ENCODE measurements at regions of chr11 and their contacts with region 1.

Region 1: GRCh38 chr11:19259487-19260345 is 19.0 kb upstream of the E2F8 start:
- DNase-seq: peak; percentile 26
- H3K4me3 ChIP-seq: no peak overlapping the region
- H3K27ac ChIP-seq: no peak overlapping the region
- H3K27me3 ChIP-seq: peaks cover 32% of the 10 kb centered on the region
- CTCF ChIP-seq: peak; percentile 96

Region 2: DNA sequence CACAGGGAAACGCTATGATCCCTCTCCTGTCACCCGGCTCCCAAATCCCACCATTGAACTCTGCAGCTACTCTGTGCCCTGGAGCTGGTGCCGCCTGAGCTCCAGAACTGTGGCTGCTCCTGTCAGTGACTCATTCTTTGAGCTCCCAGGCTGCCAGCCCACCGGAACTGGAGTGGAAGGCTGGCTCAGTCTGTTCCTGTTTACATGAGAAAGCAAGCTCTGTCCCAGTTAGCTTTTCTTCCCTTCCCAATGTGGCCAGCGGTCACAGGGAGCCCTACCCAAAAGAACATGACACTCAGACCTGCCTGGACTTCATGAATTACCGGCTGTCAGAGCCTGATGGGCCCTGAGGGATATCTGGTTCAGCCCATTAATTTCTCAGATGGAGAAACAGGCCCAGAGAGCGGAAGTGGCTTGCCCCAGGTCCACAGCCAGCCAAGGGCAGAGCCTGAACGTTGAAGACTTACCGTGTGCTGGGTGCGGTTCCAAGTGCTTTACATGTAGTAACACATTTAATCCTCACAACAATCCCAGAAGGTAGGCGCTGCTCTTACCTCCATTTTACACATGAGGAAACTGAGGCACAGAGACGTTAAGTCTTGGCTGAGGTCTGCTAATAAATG is 509.9 kb before region 1 on chr11:
- CTCF ChIA-PET with region 1: no interaction called
- POLR2A ChIA-PET with region 1: no interaction called
- DNase-seq: peak; percentile 29
- H3K4me3 ChIP-seq: no peak overlapping the region
- H3K27ac ChIP-seq: peak overlapping the region; percentile 57
- H3K27me3 ChIP-seq: no peaks in the 10 kb centered on the region
- CTCF ChIP-seq: no peak

Region 3: GRCh38 chr11:19134004-19134403 is 125.7 kb before region 1 on chr11:
- CTCF ChIA-PET with region 1: no interaction called
- POLR2A ChIA-PET with region 1: no interaction called
- DNase-seq: no peak
- H3K4me3 ChIP-seq: no peak overlapping the region
- H3K27ac ChIP-seq: no peak overlapping the region
- H3K27me3 ChIP-seq: no peaks in the 10 kb centered on the region
- CTCF ChIP-seq: no peak

Region 4: DNA sequence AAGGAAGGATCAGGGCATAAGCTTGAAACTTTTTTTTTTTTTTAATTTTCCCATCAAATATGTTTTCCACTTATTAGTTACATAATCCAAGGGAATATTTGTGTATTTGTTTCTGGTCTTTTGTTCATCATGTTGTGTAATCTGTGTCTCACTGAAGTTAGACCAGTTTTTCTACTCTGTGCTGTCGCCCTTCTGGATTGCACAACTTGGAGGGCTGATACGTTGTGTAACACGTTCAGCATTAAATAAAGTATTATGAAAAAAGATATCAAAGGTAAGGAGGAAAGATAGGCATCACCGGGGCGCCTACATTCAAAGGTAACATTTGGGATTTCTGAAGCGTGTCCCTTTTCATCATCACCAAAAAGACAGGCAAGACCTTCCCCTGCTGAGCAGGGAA is 15.6 kb before region 1 on chr11:
- CTCF ChIA-PET with region 1: interaction called, 19 read pairs
- POLR2A ChIA-PET with region 1: no interaction called
- DNase-seq: no peak
- H3K4me3 ChIP-seq: no peak overlapping the region
- H3K27ac ChIP-seq: no peak overlapping the region
- H3K27me3 ChIP-seq: peaks cover 23% of the 10 kb centered on the region
- CTCF ChIP-seq: no peak

Region 5: DNA sequence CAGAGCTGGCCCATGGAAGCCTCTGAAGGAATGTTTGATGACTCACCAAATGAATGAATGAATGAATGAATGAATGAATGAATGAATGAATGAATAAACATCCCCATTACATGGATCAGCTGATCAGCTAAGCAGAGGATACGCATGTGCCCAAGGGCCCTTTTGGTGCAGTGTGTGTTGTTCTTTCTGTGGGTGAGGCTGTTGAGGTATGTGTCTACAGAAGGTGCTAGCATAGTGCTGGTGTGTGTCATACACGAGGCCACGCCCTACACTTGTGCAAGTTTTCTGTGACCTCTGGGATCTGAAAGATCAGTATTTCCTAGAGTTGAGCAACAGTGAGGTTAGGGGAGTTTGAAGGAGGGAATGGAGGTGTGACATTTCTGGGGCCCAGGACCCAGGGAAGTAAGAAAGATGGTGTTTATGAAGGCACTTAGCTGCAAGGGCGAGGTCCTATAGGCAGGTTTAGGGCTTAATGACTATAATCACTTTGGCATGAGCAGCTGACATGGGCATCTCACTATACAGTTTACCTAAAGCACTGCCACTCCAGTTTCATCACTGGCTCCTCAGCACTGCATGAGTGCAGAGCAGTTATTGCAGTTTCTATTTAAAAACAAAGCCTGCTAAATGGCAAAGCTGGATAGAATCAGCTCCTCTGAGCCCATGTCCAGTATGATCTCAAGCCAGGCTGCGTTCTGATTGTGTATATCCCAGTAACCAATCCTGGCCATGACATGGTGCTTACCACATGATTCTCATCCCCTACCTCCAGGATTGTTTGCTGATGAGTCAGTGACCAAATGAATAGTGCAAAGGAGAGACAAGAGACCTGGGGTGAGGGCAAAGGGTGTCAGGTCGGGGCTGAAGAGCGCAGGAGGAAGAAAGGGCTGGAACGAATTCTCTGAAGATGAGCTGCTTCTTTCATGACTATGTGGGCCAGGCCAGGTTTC is 17.4 kb after region 1 on chr11:
- CTCF ChIA-PET with region 1: interaction called, 19 read pairs
- POLR2A ChIA-PET with region 1: no interaction called
- DNase-seq: no peak
- H3K4me3 ChIP-seq: no peak overlapping the region
- H3K27ac ChIP-seq: no peak overlapping the region
- H3K27me3 ChIP-seq: peaks cover 13% of the 10 kb centered on the region
- CTCF ChIP-seq: no peak

Region 6: DNA sequence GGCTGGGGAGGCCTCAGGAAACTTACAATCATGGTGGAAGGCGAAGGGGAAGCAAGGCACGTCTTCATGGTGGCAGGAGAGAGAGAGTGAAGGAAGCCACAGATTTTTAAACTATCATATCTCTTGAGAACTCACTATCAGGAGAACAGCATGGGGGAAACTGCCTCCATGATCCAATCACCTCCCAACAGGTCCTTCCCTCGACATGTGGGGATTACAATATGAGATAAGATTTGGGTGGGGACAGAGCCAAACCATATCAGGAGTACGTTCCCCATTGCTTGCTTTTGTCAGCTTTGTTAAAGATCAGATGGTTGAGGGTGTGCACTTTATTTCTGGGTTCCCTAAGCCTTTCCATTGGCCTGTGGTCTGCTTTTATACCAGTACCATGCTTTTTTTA is 34.7 kb after region 1 on chr11:
- CTCF ChIA-PET with region 1: interaction called, 10 read pairs
- POLR2A ChIA-PET with region 1: no interaction called
- DNase-seq: no peak
- H3K4me3 ChIP-seq: no peak overlapping the region
- H3K27ac ChIP-seq: no peak overlapping the region
- H3K27me3 ChIP-seq: peaks cover 20% of the 10 kb centered on the region
- CTCF ChIP-seq: no peak

Region 7: GRCh38 chr11:19326499-19326898 is 66.8 kb after region 1 on chr11:
- CTCF ChIA-PET with region 1: interaction called, 12 read pairs
- POLR2A ChIA-PET with region 1: no interaction called
- DNase-seq: no peak
- H3K4me3 ChIP-seq: no peak overlapping the region
- H3K27ac ChIP-seq: no peak overlapping the region
- H3K27me3 ChIP-seq: peaks cover 41% of the 10 kb centered on the region
- CTCF ChIP-seq: peak; percentile 54